ENCODE measurements at regions of chr1 and their contacts with region 1.

Region 1: DNA sequence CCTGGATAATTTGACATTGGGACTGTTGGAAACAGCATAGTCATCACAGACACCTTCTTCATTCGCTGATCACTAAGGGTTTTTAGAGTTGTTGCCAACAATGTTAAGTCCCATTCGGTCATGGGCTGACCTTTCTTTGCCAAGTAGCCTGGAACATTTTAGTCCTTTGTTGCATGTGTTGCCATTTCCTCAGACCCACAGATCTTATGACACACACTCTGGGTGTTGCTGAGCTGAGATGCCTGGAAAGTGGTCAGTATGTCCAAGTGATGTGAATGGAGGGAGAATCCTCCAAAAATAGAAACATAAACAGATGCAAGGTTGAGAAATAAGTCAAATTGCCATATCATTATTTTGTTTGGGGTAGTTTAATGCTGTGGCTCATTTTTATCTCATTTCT is 61.5 kb upstream of the GJA5 start:
- DNase-seq: peak; percentile 72
- H3K4me3 ChIP-seq: no peak overlapping the region
- H3K27ac ChIP-seq: no peak overlapping the region
- H3K4me1 ChIP-seq: peaks cover 7% of the 10 kb centered on the region
- H3K27me3 ChIP-seq: no peaks in the 10 kb centered on the region
- CTCF ChIP-seq: no peak
- POLR2A ChIP-seq: no peak

Region 2: DNA sequence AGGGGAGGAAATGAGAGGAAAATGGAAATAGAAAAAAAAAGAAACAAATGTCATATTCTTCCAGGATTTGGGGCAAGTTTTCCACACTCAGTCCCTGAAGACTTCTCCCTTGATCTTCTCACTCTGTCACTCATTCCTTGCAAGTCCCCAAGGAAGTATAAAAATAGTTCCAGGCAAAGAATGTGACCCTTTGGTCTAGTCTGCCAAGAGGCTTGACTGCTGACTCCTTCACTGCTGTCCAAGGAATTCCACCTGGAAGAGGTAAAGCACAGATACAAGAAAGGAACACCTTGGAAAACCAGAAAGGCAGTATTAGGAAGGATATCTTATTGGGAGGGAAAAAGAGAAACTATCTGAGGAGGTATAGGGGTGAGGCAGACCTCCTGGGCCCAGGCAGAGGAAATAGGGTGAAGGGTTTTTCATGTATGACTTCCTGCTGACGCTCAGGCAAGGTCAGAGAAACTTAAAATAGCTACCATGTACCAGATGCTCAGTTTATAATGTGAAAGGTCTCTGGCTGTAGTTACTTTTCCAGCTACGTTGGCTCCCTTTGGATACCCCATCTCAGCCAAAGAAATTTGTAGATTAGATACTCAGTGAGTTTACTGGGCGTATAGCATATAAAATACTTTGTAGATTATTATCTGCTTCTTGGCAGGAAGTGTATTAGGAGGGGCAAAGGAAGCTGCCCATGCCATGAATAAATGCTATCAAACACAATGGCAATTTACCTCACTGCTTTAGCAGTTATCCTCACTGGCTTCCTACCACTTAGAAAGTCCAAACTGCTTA is 59.5 kb before region 1 on chr1:
- CTCF ChIA-PET with region 1: no interaction called
- POLR2A ChIA-PET with region 1: no interaction called
- dilution Hi-C with region 1: no loop called
- intact Hi-C with region 1: loop called (anchors 10 kb)
- DNase-seq: peak; percentile 41
- H3K4me3 ChIP-seq: no peak overlapping the region
- H3K27ac ChIP-seq: no peak overlapping the region
- H3K4me1 ChIP-seq: peaks cover 16% of the 10 kb centered on the region
- H3K27me3 ChIP-seq: peaks cover 19 to 26% of the 10 kb centered on the region in 2 experiments
- CTCF ChIP-seq: no peak
- POLR2A ChIP-seq: no peak

Region 3: DNA sequence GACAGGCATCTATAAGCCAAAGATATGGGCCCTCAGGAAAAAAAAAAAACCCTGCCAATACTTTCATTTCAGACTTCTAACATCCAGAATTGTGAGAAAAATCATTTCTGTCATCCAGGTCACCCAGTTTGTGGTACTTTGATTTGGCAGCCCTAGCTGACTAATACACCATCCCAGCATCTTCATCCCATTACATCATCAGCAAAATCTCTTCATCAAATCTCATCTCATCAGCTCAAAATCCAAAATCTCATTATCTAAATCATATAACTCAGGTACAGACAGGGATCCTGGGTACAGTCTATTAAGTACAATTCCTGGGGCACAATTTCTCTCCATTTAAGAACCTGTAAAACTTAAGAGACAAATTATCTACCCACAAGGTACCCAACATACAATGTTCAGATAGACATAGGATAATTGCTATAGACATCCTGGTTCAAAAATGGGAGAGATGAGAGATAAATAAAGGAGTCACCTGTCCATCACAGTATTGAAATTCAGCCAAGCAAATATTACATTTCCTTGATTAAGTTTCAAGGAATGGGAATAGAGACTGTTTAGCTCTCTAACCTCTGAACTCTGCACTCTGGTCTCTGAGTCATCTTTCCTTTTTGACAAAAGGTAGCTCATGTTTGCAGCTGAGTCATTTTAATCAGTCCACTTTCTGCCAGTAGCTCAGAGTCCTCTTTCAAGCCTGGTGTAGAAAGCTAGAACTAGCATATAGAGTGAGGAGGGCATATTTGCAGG is 29.1 kb after region 1 on chr1:
- CTCF ChIA-PET with region 1: no interaction called
- POLR2A ChIA-PET with region 1: no interaction called
- dilution Hi-C with region 1: no loop called
- intact Hi-C with region 1: loop called (anchors 1 kb)
- DNase-seq: peak; percentile 85
- H3K4me3 ChIP-seq: no peak overlapping the region
- H3K27ac ChIP-seq: peak overlapping the region; percentile 21
- H3K4me1 ChIP-seq: peaks cover 42% of the 10 kb centered on the region
- H3K27me3 ChIP-seq: no peaks in the 10 kb centered on the region
- CTCF ChIP-seq: no peak
- POLR2A ChIP-seq: no peak

Region 4: GRCh38 chr1:147878022-147878421 is 56.1 kb after region 1 on chr1:
- CTCF ChIA-PET with region 1: no interaction called
- POLR2A ChIA-PET with region 1: no interaction called
- dilution Hi-C with region 1: no loop called
- intact Hi-C with region 1: loop called (anchors 2 kb)
- DNase-seq: peak; percentile 89
- H3K4me3 ChIP-seq: no peak overlapping the region
- H3K27ac ChIP-seq: peak overlapping the region; percentile 73
- H3K4me1 ChIP-seq: peaks cover 28% of the 10 kb centered on the region
- H3K27me3 ChIP-seq: no peaks in the 10 kb centered on the region
- CTCF ChIP-seq: no peak
- POLR2A ChIP-seq: no peak

Measured in endothelial cell of umbilical vein (primary cell).